Activated B cell treated with CpG ODN at 0.5 μM for 24 hours (primary cell): ENCODE measurements at regions of chr14 and their contacts with region 1.

Region 1: DNA sequence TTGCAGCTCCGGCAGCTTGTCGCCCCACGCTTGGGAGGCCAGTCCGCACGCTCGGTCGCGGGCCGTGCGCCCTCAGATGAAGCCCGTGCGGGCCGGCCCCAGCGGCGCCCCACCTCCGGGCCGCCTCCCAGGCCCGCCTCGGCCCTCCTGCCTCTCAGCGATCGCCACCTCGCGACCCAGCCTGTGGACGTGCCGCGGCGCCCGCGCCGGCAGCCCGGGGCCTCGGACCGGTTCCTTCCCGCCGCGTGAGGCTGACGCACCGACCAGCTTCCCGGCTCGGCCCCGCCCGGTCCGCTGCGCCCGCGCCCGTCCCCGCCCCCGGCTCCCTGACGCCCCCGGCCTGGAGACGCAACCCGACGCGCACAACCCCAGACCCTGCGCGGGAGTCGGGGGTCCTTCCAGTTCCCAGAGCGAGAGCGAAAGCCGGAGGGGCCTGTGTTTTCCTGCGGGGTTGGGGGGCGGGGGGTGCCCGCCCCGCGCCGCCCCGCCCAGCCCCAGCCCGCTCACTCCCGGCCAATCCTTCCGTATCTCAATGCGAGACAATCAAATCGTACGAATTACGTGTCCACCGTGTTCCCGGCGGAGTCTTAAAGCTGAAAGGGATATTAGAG is at the start of gene ERO1A:
- DNase-seq: peak; percentile 73
- ATAC-seq: peak; percentile 75
- H3K4me3 Mint-ChIP-seq: peak within 1 kb of the TSS; percentile 99
- H3K27ac Mint-ChIP-seq: peak within 1 kb of the TSS; percentile 94
- H3K4me1 Mint-ChIP-seq: peaks cover 30% of the 10 kb centered on the region
- H3K27me3 Mint-ChIP-seq: no peaks in the 10 kb centered on the region
- CTCF ChIP-seq: no peak
- total RNA-seq, gene ERO1A: 30.8 and 31.5 TPM in 2 replicates

Region 2: GRCh38 chr14:52678591-52678990 is 17.0 kb before region 1 on chr14:
- CTCF ChIA-PET with region 1: no interaction called
- POLR2A ChIA-PET with region 1: interaction called, 3 read pairs
- intact Hi-C with region 1: loop called (anchors 2 kb)
- DNase-seq: no peak
- ATAC-seq: no peak
- H3K4me3 Mint-ChIP-seq: no peak overlapping the region
- H3K27ac Mint-ChIP-seq: no peak overlapping the region
- H3K4me1 Mint-ChIP-seq: no peaks in the 10 kb centered on the region
- H3K27me3 Mint-ChIP-seq: no peaks in the 10 kb centered on the region
- CTCF ChIP-seq: no peak

Region 3: DNA sequence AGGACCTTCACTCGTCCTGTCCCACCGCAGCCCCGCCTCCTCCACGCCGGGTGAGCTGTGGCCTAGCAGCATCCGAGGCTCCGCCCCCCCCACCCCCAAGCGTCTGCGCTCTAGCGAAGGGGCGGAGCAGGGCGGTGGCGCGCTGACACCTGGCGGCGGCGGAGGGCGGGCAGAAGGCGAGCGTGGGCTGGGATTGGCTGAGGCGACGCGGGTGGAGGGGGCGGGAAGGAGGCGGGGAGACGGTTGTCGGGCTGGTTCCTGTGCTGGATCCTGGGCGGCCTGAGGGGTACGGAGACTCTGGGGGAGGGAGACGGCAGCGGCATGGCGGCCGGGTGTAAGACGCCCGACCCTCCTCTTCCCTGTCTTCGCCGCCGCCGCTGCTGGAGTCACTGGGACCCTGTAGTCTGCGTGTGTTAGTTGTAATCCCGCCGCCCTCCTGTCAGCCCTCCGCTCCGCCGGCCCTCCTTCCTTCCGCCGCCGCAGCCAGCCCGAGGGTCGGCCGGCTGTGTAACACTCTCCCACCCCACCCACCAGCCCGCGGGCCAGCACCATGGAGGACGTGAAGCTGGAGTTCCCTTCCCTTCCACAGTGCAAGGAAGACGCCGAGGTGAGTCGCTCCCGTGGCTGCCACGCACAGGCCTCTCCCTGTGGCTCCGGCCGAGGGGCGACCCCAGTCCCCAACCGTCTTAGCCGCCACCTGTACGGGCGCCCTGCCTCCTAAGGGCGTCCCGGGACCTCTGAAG is 34.5 kb after region 1 on chr14 and contains the start of gene STYX:
- CTCF ChIA-PET with region 1: no interaction called
- POLR2A ChIA-PET with region 1: interaction called, 7 read pairs
- intact Hi-C with region 1: loop called (anchors 1 kb)
- DNase-seq: peak; percentile 95
- ATAC-seq: peak; percentile 96
- H3K4me3 Mint-ChIP-seq: peak within 1 kb of the TSS; percentile 94
- H3K27ac Mint-ChIP-seq: peak within 1 kb of the TSS; percentile 89
- H3K4me1 Mint-ChIP-seq: peaks cover 46% of the 10 kb centered on the region
- H3K27me3 Mint-ChIP-seq: no peaks in the 10 kb centered on the region
- CTCF ChIP-seq: no peak
- total RNA-seq, gene STYX: 13.1 and 13.5 TPM in 2 replicates